ENCODE measurements at regions of chr3 and their contacts with region 1.

Region 1: DNA sequence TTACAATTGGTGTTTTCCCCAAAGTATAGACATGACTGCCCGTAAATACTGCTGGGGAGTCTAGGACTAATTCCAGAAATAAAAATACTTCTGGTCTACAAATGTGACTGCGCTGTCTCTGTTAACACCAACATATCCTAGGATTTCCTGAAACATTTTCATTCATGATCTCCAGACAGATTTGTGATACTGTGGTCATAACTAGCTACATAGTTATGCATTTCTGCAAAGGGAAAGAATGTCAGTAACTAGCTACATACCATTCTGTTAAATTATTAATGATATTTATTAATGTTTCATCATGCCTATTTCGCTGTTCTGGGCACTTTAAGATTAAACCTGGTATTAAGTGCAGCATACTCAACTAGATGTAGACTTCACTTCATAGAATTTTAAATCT is 33.3 kb downstream of the SETD5 start:
- DNase-seq: no peak
- ATAC-seq: no peak

Region 2: GRCh38 chr3:9384141-9384853 is 46.4 kb before region 1 on chr3:
- intact Hi-C with region 1: loop called (anchors 5 kb)
- DNase-seq: no peak
- ATAC-seq: peak in 1 of 2 donors; percentile 16

Region 3: DNA sequence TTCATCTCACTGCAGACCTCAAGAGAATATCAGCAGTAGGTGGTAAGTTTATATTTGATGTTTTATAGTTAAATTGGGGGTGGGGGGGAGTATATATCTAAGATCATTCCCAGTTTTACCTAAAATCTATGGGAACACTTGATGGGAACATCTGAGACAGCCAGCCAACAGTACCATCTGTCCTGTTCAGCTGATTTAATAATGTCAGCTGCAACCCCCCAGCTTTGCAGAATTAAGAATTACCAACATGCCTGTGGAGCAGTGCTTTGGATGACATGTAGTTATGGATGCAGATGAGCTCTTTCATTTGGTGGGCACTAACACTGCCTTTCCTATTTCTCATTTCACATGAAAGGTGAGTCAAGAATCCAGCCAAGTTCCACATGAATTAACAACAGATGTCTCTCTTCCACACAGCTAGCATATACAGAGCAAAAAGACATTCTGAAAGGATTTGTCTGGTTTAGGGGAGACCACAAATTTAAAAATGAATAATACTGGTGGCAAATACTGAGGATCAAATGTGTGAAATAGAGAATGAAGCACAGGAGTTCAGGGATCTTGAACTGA is 42.8 kb after region 1 on chr3:
- intact Hi-C with region 1: loop called in 1 of 2 experiments (anchors 5 kb)
- DNase-seq: no peak
- ATAC-seq: no peak

Region 4: GRCh38 chr3:9485248-9485647 is 54.5 kb after region 1 on chr3:
- intact Hi-C with region 1: no loop called
- DNase-seq: no peak
- ATAC-seq: no peak

Measured in left cardiac atrium (tissue), 4 donors.